Right lobe of liver (tissue), 6 donors: ENCODE measurements at regions of chr5 and their contacts with region 1.

Region 1: DNA sequence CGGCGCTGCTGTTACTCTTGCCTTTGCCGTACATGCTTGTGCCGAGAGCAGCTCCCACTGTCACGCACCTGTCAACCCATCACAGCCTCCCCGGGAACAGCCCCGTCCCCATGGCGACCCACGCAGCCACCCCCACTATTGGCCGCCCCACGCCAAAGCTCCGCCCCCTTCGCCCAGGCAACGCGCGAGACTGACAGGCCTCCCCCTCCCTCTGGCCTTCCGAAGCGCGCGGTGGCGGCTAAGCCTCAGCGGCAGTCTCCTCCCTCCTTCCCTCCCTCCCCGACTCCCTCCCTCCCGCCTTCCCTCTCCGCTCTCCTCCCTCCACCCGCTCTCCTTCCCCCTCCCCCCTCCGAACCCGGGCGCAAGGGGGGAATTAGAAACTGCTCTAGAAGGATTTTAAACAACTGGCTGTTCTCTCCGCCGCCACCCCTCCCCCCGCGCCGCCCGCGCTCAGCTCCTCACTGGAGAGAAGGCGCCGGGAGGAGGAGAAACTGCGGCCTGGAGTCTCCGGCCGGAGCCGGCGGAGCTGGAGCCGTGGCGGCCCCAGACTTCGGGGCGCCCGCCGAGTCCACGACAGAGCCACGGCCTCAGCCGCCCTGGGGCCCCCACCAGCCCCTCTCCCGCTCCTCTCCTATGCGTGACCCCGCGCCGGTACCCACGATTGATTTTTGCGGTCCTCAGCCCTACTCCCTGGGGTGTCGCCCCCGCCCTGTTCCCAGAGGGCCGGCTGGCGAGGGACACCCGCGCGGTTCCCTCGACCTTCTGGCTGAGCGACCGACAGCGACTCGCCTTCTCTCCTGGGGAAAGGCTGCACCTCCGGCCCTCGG is at the start of gene SSBP2:
- DNase-seq: peak; percentile 100
- ATAC-seq: peak; percentile 94 to 97 (median 96)
- H3K4me3 ChIP-seq: peak within 1 kb of the TSS; percentile 70 to 73 (median 70)
- H3K27ac ChIP-seq: peak within 1 kb of the TSS; percentile 89 to 96 (median 90)
- H3K4me1 ChIP-seq: no peaks in the 10 kb centered on the region
- H3K27me3 ChIP-seq: no peaks in the 10 kb centered on the region
- CTCF ChIP-seq: no peak
- POLR2A ChIP-seq: peak; percentile 44
- total RNA-seq, gene SSBP2: 2.0 to 4.8 (median 3.7) TPM

Region 2: GRCh38 chr5:81675846-81676245 is 75.4 kb before region 1 on chr5:
- intact Hi-C with region 1: no loop called
- DNase-seq: no peak
- ATAC-seq: no peak
- H3K4me3 ChIP-seq: no peak overlapping the region
- H3K27ac ChIP-seq: no peak overlapping the region
- H3K4me1 ChIP-seq: no peaks in the 10 kb centered on the region
- H3K27me3 ChIP-seq: no peaks in the 10 kb centered on the region
- CTCF ChIP-seq: no peak
- POLR2A ChIP-seq: no peak

Region 3: DNA sequence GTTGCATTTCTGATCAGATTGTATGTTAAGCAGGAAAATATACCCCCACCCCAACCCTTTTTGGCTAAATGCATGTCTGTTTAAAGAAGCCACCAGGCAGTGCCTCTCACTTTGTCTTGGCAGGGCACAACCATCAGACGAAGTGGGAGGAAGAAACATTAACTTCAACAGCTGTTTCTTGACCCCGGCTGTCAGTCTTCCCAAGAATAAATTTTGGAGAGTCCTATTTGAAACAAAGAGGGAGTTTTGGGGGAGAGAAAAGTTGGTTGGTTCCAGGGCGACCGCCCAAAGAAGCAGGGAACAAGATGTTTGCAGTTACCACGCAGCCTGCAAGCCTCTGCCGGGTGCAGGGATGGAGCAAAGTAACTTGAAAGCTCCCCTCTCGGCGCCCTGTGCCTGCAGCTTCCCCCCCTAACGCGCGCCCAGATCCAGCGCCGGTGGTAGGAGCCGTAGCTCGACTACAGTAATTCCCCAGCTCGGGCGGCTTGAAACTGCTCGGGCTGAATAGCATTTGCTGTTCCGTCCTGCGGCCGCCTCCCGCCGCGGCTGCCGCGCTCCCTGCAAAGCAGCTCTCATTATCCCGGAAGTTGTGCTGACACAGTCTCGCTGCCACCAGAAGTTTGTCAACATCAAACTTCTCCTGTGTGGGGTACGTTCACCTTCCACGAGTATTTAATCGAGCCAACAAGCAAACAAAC is 100.4 kb after region 1 on chr5:
- intact Hi-C with region 1: loop called in 1 of 2 experiments (anchors 10 kb)
- DNase-seq: peak; percentile 94 to 95 (median 94)
- ATAC-seq: peak; percentile 97 to 99 (median 98)
- H3K4me3 ChIP-seq: peak overlapping the region; percentile 32 to 67 (median 58)
- H3K27ac ChIP-seq: peak overlapping the region; percentile 52 to 74 (median 73)
- H3K4me1 ChIP-seq: peaks cover 0 to 9% (median 3%) of the 10 kb centered on the region in 4 donors
- H3K27me3 ChIP-seq: no peaks in the 10 kb centered on the region
- CTCF ChIP-seq: no peak
- POLR2A ChIP-seq: peak; percentile 44